Lower leg skin (tissue), 4 donors: ENCODE measurements at regions of chr20 and their contacts with region 1.

Region 1: GRCh38 chr20:59994697-59995122 is 36.5 kb downstream of the CDH26 start:
- DNase-seq: peak in 1 of 2 donors; percentile 51
- H3K4me3 ChIP-seq: no peak overlapping the region
- CTCF ChIP-seq: no peak
- POLR2A ChIP-seq: no peak

Region 2: GRCh38 chr20:59195316-59195993 is 799.3 kb before region 1 on chr20:
- intact Hi-C with region 1: loop called (anchors 5 kb)
- DNase-seq: no peak
- H3K4me3 ChIP-seq: no peak overlapping the region
- CTCF ChIP-seq: no peak
- POLR2A ChIP-seq: no peak